Activated CD4-positive, alpha-beta T cell treated with anti-CD3 and anti-CD28 coated beads, Interleukin-2, amount 10 ng/mL, durations not matched to agents 7 days and 5 days (primary cell): ENCODE measurements at regions of chr2 and their contacts with region 1.

Region 1: DNA sequence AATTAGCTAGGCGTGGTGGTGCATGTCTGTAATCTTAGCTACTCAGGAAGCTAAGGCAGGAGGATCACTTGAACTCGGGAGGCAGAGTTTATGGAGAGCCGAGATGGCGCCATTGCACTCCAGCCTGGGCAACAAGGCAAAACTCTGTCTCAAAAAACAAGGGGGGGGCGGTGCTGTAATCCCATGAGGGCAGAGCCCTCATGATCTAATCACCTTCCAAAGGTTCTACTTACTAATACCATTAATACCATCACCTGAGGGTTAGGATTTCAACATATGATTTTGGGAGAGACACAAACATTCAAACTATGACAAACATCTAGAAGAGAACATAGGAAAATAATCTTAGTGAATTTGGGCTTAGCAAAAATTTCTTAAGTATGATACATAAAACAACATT is 202.1 kb upstream of the FOSL2 start:
- DNase-seq: no peak
- H3K4me3 Mint-ChIP-seq: no peak overlapping the region
- H3K27ac Mint-ChIP-seq: no peak overlapping the region
- H3K4me1 Mint-ChIP-seq: peaks cover 7% of the 10 kb centered on the region
- H3K27me3 Mint-ChIP-seq: no peaks in the 10 kb centered on the region

Region 2: GRCh38 chr2:28233164-28233676 is 42.7 kb after region 1 on chr2:
- CTCF ChIA-PET with region 1: no interaction called
- POLR2A ChIA-PET with region 1: no interaction called
- DNase-seq: no peak
- H3K4me3 Mint-ChIP-seq: no peak overlapping the region
- H3K27ac Mint-ChIP-seq: no peak overlapping the region
- H3K4me1 Mint-ChIP-seq: peaks cover 3% of the 10 kb centered on the region
- H3K27me3 Mint-ChIP-seq: no peaks in the 10 kb centered on the region

Region 3: DNA sequence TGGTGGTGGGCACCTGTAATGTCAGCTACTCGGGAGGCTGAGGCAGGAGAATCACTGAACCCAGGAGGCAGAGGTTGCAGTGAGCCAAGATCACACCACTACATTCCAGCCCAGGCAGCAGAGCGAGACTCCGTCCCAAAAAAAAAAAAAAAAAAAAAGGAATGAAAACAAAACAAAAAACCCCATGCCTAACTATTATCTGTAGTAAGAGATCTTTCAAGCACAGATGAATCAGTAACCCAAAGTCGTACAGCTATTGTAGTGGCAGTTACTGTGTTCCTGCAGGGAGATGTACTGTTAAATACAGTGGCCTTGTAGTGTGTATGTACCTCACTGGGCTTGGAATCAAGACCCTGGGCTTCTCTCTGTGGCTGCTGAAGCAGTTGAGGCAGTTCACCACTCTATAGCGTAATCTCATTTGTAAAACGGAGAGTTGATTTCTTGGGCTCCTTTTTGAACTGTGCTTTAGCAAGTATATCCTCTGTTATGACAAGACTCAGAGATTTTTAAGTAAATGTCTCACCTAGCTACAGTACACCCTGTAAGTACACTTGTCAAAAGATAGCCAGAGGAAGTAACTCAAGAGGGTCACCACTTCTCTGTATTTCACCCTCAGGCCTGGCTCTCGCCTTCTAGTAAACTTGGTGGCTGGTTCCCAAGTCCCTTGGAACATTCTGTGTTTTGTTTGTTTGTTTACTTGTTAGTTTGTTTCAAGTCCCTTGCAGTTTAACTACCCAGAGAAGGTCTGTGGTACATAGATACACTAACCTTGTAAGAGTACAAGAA is 92.5 kb after region 1 on chr2:
- CTCF ChIA-PET with region 1: no interaction called
- POLR2A ChIA-PET with region 1: interaction called, 11 read pairs
- DNase-seq: no peak
- H3K4me3 Mint-ChIP-seq: no peak overlapping the region
- H3K27ac Mint-ChIP-seq: no peak overlapping the region
- H3K4me1 Mint-ChIP-seq: no peaks in the 10 kb centered on the region
- H3K27me3 Mint-ChIP-seq: no peaks in the 10 kb centered on the region